ENCODE measurements at regions of chr11 and their contacts with region 1.

Region 1: GRCh38 chr11:1694064-1694845 is 2.7 kb upstream of the KRTAP5-6 start:
- DNase-seq: peak; percentile 82
- ATAC-seq: peak; percentile 90
- H3K4me3 Mint-ChIP-seq: no peak overlapping the region
- H3K27ac Mint-ChIP-seq: peak overlapping the region; percentile 49
- H3K4me1 Mint-ChIP-seq: peaks cover 10% of the 10 kb centered on the region
- H3K27me3 Mint-ChIP-seq: peaks cover 27% of the 10 kb centered on the region

Region 2: DNA sequence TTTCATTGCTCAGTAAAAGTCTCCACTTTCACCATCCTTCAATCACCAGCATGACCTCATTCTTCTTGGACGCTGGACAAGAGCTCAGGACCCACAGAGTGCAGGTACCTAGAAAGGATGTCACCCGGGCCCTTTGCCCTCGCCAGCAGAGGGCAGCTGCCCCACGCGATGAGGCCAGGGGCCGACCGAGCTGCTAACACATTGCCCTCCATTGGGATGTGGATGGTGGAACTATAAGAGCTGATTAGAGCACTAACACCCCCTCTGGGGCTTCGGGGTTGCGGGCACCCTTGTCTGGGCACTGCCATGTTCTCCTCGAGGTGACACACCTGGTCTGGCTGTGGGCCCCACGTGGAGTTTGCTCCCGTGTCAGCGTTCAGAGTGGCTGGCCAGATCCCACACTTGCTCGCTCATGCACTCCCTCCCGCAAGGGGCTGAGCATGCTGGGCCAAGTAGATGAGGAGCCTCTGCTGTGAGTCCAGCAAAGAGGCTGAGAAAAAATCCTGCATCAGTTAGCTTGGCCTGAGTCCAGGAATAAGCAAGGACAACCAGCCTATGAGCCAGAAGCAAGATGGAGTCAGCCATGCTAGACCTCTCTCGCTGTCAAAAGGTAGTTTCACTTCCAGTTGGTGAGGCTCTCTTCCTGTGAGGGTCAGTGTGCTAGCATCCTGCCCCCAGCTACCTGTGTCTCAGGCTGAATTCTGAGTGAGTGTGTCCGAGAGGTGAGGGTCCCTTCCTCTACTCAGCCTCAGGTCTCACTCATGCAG is 12.6 kb after region 1 on chr11:
- CTCF ChIA-PET with region 1: interaction called, 35 read pairs
- POLR2A ChIA-PET with region 1: interaction called, 3 read pairs
- DNase-seq: peak; percentile 44
- ATAC-seq: peak; percentile 44
- H3K4me3 Mint-ChIP-seq: no peak overlapping the region
- H3K27ac Mint-ChIP-seq: no peak overlapping the region
- H3K4me1 Mint-ChIP-seq: peaks cover 25% of the 10 kb centered on the region
- H3K27me3 Mint-ChIP-seq: peaks cover 33% of the 10 kb centered on the region

Region 3: DNA sequence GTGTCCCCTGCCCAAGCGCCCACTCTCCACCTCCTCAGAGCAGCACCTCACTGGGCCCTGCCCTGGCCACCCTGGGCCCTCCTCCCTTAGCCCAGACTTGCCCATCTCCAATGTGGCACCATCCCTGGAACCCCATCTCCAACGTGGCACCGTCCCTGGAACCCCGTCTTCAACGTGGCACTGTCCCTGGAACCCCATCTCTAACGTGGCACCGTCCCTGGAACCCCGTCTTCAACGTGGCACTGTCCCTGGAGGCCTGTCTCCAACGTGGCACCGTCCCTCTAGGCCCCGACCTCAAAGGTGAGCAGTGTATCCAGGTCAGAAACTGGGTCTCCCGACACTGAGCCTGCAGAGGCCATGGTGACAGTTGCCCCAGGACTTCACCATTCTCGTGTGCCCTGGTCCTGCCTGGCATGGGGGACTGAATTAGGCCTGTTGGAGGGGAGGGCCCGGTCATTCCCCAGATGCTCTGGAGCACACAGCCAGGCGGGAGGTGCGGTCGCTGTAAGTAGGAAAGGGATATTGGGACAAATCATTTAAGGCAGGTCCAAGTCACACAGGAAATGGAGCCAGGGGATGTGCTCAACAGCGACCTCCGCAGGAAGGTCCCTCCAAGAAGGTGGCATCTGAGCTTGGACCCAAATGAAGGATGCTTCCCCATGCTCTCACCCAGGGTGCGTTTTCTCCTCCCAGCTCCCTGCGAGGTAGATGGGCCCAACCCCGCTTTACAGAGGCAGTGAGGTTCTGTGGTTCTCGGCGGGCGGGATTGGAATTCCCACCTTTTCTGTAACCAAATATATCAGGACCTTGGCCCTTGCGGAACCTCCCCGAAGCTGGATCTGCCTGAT is 71.8 kb after region 1 on chr11:
- CTCF ChIA-PET with region 1: interaction called, 14 read pairs
- POLR2A ChIA-PET with region 1: no interaction called
- DNase-seq: no peak
- ATAC-seq: no peak
- H3K4me3 Mint-ChIP-seq: no peak overlapping the region
- H3K27ac Mint-ChIP-seq: no peak overlapping the region
- H3K4me1 Mint-ChIP-seq: peaks cover 36% of the 10 kb centered on the region
- H3K27me3 Mint-ChIP-seq: peaks cover 6% of the 10 kb centered on the region

Region 4: GRCh38 chr11:1807264-1807995 is 113.2 kb after region 1 on chr11:
- CTCF ChIA-PET with region 1: interaction called, 29 read pairs
- POLR2A ChIA-PET with region 1: no interaction called
- DNase-seq: no peak
- ATAC-seq: no peak
- H3K4me3 Mint-ChIP-seq: no peak overlapping the region
- H3K27ac Mint-ChIP-seq: no peak overlapping the region
- H3K4me1 Mint-ChIP-seq: no peaks in the 10 kb centered on the region
- H3K27me3 Mint-ChIP-seq: peaks cover 25% of the 10 kb centered on the region

Region 5: GRCh38 chr11:1837171-1838076 is 143.2 kb after region 1 on chr11:
- CTCF ChIA-PET with region 1: interaction called, 311 read pairs
- POLR2A ChIA-PET with region 1: interaction called, 10 read pairs
- DNase-seq: peak; percentile 93
- ATAC-seq: peak; percentile 95
- H3K4me3 Mint-ChIP-seq: no peak overlapping the region
- H3K27ac Mint-ChIP-seq: no peak overlapping the region
- H3K4me1 Mint-ChIP-seq: peaks cover 8% of the 10 kb centered on the region
- H3K27me3 Mint-ChIP-seq: peaks cover 4% of the 10 kb centered on the region

Region 6: DNA sequence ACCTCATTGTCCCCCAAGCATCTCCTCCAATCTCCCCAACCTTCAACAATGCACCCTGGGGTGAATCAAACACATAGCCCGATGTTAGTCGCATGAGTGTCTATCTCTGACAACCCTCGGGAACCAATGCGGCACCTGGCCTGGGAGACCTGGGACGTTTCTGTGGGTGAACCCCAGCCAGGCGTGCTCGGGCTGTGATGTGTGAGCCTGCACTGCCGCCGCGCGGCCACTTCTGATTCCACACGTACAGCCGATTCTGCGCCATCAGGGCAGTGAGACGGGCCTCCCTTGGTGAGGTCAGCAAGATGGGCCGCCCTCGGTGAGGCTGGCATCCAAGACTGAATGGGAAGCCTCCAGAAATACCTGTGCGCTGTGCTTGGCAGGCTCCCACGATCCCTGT is 308.6 kb after region 1 on chr11:
- CTCF ChIA-PET with region 1: interaction called, 33 read pairs
- POLR2A ChIA-PET with region 1: no interaction called
- DNase-seq: no peak
- ATAC-seq: peak; percentile 57
- H3K4me3 Mint-ChIP-seq: no peak overlapping the region
- H3K27ac Mint-ChIP-seq: no peak overlapping the region
- H3K4me1 Mint-ChIP-seq: no peaks in the 10 kb centered on the region
- H3K27me3 Mint-ChIP-seq: no peaks in the 10 kb centered on the region

Measured in activated CD8-positive, alpha-beta T cell treated with anti-CD3 and anti-CD28 coated beads, Interleukin-2, amount 10 ng/mL, durations not matched to agents 7 days and 5 days (primary cell).